Caco-2 (cell line): ENCODE measurements at regions of chr6 and their contacts with region 1.

Region 1: GRCh38 chr6:79233611-79234149 is 802 bp downstream of the HMGN3 start:
- DNase-seq: peak; percentile 89
- H3K4me3 ChIP-seq: peak overlapping the region; percentile 66
- H3K4me3 Mint-ChIP-seq: peak overlapping the region; percentile 85
- H3K27ac Mint-ChIP-seq: peak overlapping the region; percentile 86
- H3K4me1 ChIP-seq: peaks cover 34% of the 10 kb centered on the region
- H3K4me1 Mint-ChIP-seq: peaks cover 34% of the 10 kb centered on the region
- H3K27me3 ChIP-seq: no peaks in the 10 kb centered on the region
- H3K27me3 Mint-ChIP-seq: no peaks in the 10 kb centered on the region
- CTCF ChIP-seq: peak in 1 of 2 experiments; percentile 48

Region 2: GRCh38 chr6:79078075-79079025 is 155.3 kb before region 1 on chr6 and contains the start of gene PHIP:
- CTCF ChIA-PET with region 1: no interaction called
- POLR2A ChIA-PET with region 1: no interaction called
- intact Hi-C with region 1: loop called (anchors 1 kb)
- DNase-seq: peak; percentile 94
- H3K4me3 ChIP-seq: peak within 1 kb of the TSS; percentile 79
- H3K4me3 Mint-ChIP-seq: peak within 1 kb of the TSS; percentile 88
- H3K27ac Mint-ChIP-seq: peak within 1 kb of the TSS; percentile 96
- H3K4me1 ChIP-seq: no peaks in the 10 kb centered on the region; the same call in 1 of the 2 replicates
- H3K4me1 Mint-ChIP-seq: peaks cover 7% of the 10 kb centered on the region
- H3K27me3 ChIP-seq: no peaks in the 10 kb centered on the region
- H3K27me3 Mint-ChIP-seq: no peaks in the 10 kb centered on the region
- CTCF ChIP-seq: no peak
- total RNA-seq, gene PHIP: 31.2 and 32.6 TPM in 2 replicates

Region 3: GRCh38 chr6:79215233-79215824 is 18.4 kb before region 1 on chr6:
- CTCF ChIA-PET with region 1: no interaction called
- POLR2A ChIA-PET with region 1: no interaction called
- intact Hi-C with region 1: loop called (anchors 1 kb)
- DNase-seq: peak; percentile 72 to 76
- H3K4me3 ChIP-seq: no peak overlapping the region
- H3K4me3 Mint-ChIP-seq: peak overlapping the region; percentile 40
- H3K27ac Mint-ChIP-seq: peak overlapping the region; percentile 67
- H3K4me1 ChIP-seq: peaks cover 41% of the 10 kb centered on the region
- H3K4me1 Mint-ChIP-seq: peaks cover 27% of the 10 kb centered on the region
- H3K27me3 ChIP-seq: no peaks in the 10 kb centered on the region
- H3K27me3 Mint-ChIP-seq: no peaks in the 10 kb centered on the region
- CTCF ChIP-seq: no peak

Region 4: DNA sequence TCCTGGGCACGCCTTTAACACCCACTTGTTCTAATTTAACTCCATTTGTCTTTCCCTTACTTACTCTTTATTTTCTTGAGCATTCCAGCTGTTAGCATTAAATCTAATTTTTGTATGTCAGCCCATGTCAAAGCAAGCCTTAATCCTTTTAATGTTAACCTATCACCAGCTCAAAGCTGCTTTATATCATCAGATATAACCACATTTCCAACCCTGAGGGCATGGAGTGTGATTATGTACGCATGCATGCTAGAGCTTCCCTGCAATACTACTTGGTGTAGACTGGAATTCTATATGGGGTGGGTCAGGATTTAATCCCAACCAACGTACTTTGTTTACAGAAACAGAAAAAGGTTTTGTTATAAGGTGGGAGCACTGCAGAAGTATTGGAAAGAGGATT is 140.2 kb after region 1 on chr6:
- CTCF ChIA-PET with region 1: no interaction called
- POLR2A ChIA-PET with region 1: no interaction called
- intact Hi-C with region 1: loop called (anchors 1 kb)
- DNase-seq: no peak
- H3K4me3 ChIP-seq: no peak overlapping the region
- H3K4me3 Mint-ChIP-seq: peak overlapping the region; percentile 10
- H3K27ac Mint-ChIP-seq: peak overlapping the region; percentile 30
- H3K4me1 ChIP-seq: peaks cover 36% of the 10 kb centered on the region
- H3K4me1 Mint-ChIP-seq: peaks cover 18% of the 10 kb centered on the region
- H3K27me3 ChIP-seq: no peaks in the 10 kb centered on the region
- H3K27me3 Mint-ChIP-seq: no peaks in the 10 kb centered on the region
- CTCF ChIP-seq: no peak

Region 5: DNA sequence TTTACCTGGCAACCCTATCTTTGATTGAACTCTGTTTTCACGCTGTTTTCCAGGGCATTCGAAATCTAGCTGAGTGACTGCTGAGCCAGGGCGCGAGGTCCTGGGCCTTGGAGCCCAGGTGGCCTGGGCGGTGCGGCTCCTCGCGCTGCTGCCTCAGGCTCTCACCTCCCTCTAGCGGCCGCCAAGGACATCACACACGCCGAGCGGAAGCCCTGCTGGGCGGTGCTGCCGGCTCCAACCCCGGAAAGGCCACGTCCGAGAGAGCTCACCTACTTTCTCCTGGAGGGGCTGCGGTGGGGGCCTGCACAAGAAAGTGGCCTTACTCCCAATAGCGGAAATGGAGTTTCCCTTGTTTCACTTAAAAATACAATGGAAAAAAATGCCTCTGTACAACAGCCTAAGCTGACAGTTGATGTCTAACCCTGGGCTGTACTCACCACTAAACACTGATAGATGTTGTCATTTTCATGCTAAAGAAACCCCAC is 636.0 kb after region 1 on chr6:
- CTCF ChIA-PET with region 1: no interaction called
- POLR2A ChIA-PET with region 1: no interaction called
- intact Hi-C with region 1: loop called (anchors 10 kb)
- DNase-seq: peak; percentile 80 to 88
- H3K4me3 ChIP-seq: 0 out of 2 replicates have a peak overlapping the region, but pooled peaks have one; percentile 4
- H3K4me3 Mint-ChIP-seq: peak overlapping the region; percentile 42
- H3K27ac Mint-ChIP-seq: no peak overlapping the region
- H3K4me1 ChIP-seq: no peaks in the 10 kb centered on the region; the same call in 1 of the 2 replicates
- H3K4me1 Mint-ChIP-seq: peaks cover 25% of the 10 kb centered on the region
- H3K27me3 ChIP-seq: no peaks in the 10 kb centered on the region
- H3K27me3 Mint-ChIP-seq: no peaks in the 10 kb centered on the region
- CTCF ChIP-seq: peak; percentile 86 to 95